Heart right ventricle (tissue), 16 donors: ENCODE measurements at regions of chr14 and their contacts with region 1.

Region 1: GRCh38 chr14:54446161-54446693 is 5.1 kb upstream of the CNIH1 start:
- DNase-seq: no peak
- ATAC-seq: no peak
- H3K4me3 ChIP-seq: no peak overlapping the region
- H3K27ac ChIP-seq: peak overlapping the region in 1 of 10 donors; percentile 64
- H3K4me1 ChIP-seq: peaks cover 0 to 41% (median 3%) of the 10 kb centered on the region in 9 donors
- H3K27me3 ChIP-seq: no peaks in the 10 kb centered on the region
- CTCF ChIP-seq: no peak

Region 2: GRCh38 chr14:54347997-54348611 is 98.1 kb before region 1 on chr14:
- intact Hi-C with region 1: no loop called
- DNase-seq: peak in 1 of 2 donors; percentile 32
- ATAC-seq: peak in 6 of 8 donors; percentile 41 to 57 (median 50)
- H3K4me3 ChIP-seq: no peak overlapping the region
- H3K27ac ChIP-seq: peak overlapping the region in 4 of 10 donors; percentile 66 to 83 (median 80)
- H3K4me1 ChIP-seq: peaks cover 0 to 27% (median 21%) of the 10 kb centered on the region in 9 donors
- H3K27me3 ChIP-seq: no peaks in the 10 kb centered on the region
- CTCF ChIP-seq: peak; percentile 55 to 89 (median 75)

Region 3: GRCh38 chr14:54483073-54483745 is 37.0 kb after region 1 on chr14:
- intact Hi-C with region 1: loop called in 4 of 10 experiments (anchors 5 kb)
- DNase-seq: no peak
- ATAC-seq: peak in 2 of 8 donors; percentile 8 to 49
- H3K4me3 ChIP-seq: no peak overlapping the region
- H3K27ac ChIP-seq: peak overlapping the region in 1 of 10 donors; percentile 1
- H3K4me1 ChIP-seq: peaks cover 6 to 94% (median 50%) of the 10 kb centered on the region in 9 donors
- H3K27me3 ChIP-seq: no peaks in the 10 kb centered on the region
- CTCF ChIP-seq: no peak

Region 4: GRCh38 chr14:55102141-55102621 is 656.0 kb after region 1 on chr14:
- intact Hi-C with region 1: no loop called
- DNase-seq: peak; percentile 75 to 77
- ATAC-seq: peak; percentile 75 to 93 (median 87)
- H3K4me3 ChIP-seq: no peak overlapping the region
- H3K27ac ChIP-seq: peak overlapping the region; percentile 76 to 96 (median 87)
- H3K4me1 ChIP-seq: peaks cover 10 to 98% (median 85%) of the 10 kb centered on the region in 9 donors
- H3K27me3 ChIP-seq: no peaks in the 10 kb centered on the region
- CTCF ChIP-seq: no peak